Left ventricle myocardium superior (tissue), 1 donor: ENCODE measurements at regions of chr5 and their contacts with region 1.

Region 1: DNA sequence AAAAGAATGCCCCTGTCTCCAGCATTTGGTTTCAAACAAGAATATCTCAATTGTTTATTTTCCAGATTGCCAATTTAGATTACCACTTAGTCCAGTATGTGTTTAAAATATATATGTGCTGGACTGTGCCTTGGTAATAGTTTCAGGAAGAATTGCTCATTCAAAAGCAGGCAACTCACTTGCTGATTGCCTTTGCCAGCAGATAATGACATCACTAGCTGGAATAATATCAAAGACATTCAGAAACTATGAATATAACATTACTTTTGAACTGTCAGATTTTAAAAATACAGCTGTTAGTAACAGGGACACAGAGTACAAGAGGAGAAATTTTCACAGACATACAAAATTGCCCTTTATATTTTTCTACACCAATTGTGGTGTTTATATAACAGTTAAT is 96.0 kb upstream of the ITGA2 start:
- DNase-seq: no peak
- ATAC-seq: peak; percentile 51

Region 2: GRCh38 chr5:52684056-52684455 is 209.0 kb before region 1 on chr5:
- intact Hi-C with region 1: loop called (anchors 10 kb)
- DNase-seq: no peak
- ATAC-seq: no peak

Region 3: GRCh38 chr5:52799983-52800393 is 93.1 kb before region 1 on chr5:
- intact Hi-C with region 1: loop called (anchors 10 kb)
- DNase-seq: peak; percentile 98
- ATAC-seq: peak; percentile 96

Region 4: GRCh38 chr5:52825826-52826225 is 67.3 kb before region 1 on chr5:
- intact Hi-C with region 1: no loop called
- DNase-seq: no peak
- ATAC-seq: no peak